Endothelial cell of umbilical vein (primary cell): ENCODE measurements at regions of chr7 and their contacts with region 1.

Region 1: GRCh38 chr7:33062782-33063443 is 337 bp upstream of the NT5C3A start:
- DNase-seq: peak; percentile 96
- H3K4me3 ChIP-seq: peak overlapping the region; percentile 56 to 87 (median 81)
- H3K27ac ChIP-seq: peak overlapping the region; percentile 81
- H3K4me1 ChIP-seq: peaks cover 15% of the 10 kb centered on the region
- H3K27me3 ChIP-seq: no peaks in the 10 kb centered on the region
- CTCF ChIP-seq: no peak
- POLR2A ChIP-seq: peak; percentile 52

Region 2: DNA sequence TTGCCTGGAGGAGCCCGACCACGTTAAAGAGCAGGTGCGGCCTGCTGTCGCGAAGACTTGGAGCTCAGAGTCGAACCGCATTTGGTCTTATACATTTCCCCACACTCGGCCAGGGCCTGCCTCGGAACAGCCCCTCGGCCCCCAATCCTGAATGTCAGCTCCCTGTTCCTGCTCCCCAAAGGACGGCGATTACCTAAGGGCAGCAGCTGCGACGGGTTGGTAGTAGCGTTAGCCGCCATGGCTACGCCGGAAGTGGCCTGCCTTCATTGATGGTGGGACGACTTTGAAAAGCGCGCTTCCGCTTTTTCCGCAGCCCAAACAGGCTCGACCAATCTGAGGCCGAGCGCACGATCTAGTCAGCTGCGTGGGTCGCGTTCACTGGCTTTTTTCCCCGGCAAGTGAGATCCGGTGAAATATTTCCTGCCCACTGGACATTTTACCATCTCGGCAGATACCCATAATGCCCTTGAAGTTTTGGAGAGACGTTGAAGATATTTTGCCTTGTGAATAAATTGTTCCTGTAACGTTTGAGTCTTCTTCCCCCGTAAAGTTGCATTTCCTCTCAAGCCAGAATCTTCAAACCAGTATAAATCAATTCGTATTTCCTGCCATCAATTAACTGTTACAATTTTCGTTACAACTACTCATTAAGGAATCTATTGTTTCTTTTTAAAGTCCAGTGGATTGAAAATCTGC is 572.6 kb before region 1 on chr7 and contains the start of gene LSM5:
- CTCF ChIA-PET with region 1: no interaction called
- POLR2A ChIA-PET with region 1: no interaction called
- dilution Hi-C with region 1: no loop called
- intact Hi-C with region 1: loop called (anchors 5 kb)
- DNase-seq: peak; percentile 94
- H3K4me3 ChIP-seq: peak within 1 kb of the TSS; percentile 38 to 86 (median 73)
- H3K27ac ChIP-seq: peak within 1 kb of the TSS; percentile 34
- H3K4me1 ChIP-seq: peaks cover 11% of the 10 kb centered on the region
- H3K27me3 ChIP-seq: no peaks in the 10 kb centered on the region
- CTCF ChIP-seq: no peak
- POLR2A ChIP-seq: peak; percentile 84
- total RNA-seq, gene LSM5: 63.3 and 68.1 TPM in 2 replicates

Region 3: GRCh38 chr7:33039257-33039902 is 23.5 kb before region 1 on chr7:
- CTCF ChIA-PET with region 1: interaction called, 3 read pairs
- POLR2A ChIA-PET with region 1: interaction called, 4 read pairs
- dilution Hi-C with region 1: no loop called
- intact Hi-C with region 1: loop called (anchors 1 kb)
- DNase-seq: peak; percentile 58
- H3K4me3 ChIP-seq: peak overlapping the region; percentile 28 to 93 (median 84)
- H3K27ac ChIP-seq: peak overlapping the region; percentile 38
- H3K4me1 ChIP-seq: peaks cover 13% of the 10 kb centered on the region
- H3K27me3 ChIP-seq: no peaks in the 10 kb centered on the region
- CTCF ChIP-seq: no peak
- POLR2A ChIP-seq: no peak